K562 (cell line): ENCODE measurements at regions of chr19 and their contacts with region 1.

Region 1: DNA sequence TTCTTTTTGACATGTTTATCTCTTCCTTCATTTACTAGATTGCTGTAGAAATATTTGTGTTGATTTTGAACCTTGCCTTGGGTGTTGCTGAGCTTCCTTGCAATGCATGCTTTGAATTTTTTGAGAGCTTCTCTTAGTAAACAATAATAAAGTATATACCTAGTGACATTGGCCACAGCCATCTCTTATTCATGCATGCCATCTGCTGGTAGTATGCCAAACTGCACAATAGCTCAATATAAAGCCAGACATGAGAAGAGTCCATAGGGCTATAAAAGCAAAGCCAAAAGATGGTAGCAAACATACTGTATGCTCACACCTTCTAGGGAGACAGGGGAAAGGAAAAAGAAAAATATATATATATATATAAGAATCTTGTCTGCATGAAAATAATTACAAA is 18.9 kb upstream of the ZSCAN5A start:
- DNase-seq: peak; percentile 48 to 72 (median 55)
- ATAC-seq: peak; percentile 89
- H3K4me3 ChIP-seq: no peak overlapping the region
- H3K27ac ChIP-seq: no peak overlapping the region
- H3K4me1 ChIP-seq: no peaks in the 10 kb centered on the region
- H3K27me3 ChIP-seq: no peaks in the 10 kb centered on the region
- CTCF ChIP-seq: peak; percentile 69 to 94 (median 85)
- EP300 ChIP-seq: no peak
- POLR2A ChIP-seq: no peak
- RAD21 ChIP-seq: peak; percentile 92 to 98

Region 2: DNA sequence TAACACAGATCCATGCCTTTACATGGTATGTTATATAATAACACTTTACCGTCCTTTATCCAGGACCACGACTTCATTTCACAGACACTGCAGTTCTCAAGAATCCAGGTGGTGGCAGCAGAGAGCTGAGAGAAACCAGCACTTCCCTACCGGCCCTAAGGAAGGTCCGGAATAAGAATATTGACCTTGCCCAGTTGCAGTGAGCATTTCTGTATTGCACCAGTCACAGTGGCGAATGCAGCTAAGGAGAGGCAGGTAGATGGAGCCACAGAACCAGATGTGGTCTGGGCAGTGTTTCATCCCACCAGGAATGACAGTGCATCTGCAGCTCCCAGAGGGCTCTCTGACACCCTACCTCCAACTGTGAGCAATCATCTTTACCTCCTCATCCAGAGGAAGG is 257.0 kb before region 1 on chr19:
- CTCF ChIA-PET with region 1: interaction called, 5 read pairs
- POLR2A ChIA-PET with region 1: no interaction called
- in situ Hi-C with region 1: no loop called
- intact Hi-C with region 1: loop called (anchors 1 kb)
- DNase-seq: peak; percentile 60 to 72 (median 64)
- ATAC-seq: peak; percentile 86
- H3K4me3 ChIP-seq: no peak overlapping the region
- H3K27ac ChIP-seq: no peak overlapping the region
- H3K4me1 ChIP-seq: peaks cover 3 to 12% of the 10 kb centered on the region in 2 experiments; a peak in 4 of 5 replicates
- H3K27me3 ChIP-seq: no peaks in the 10 kb centered on the region
- CTCF ChIP-seq: peak; percentile 84 to 92 (median 85)
- EP300 ChIP-seq: no peak
- POLR2A ChIP-seq: no peak
- RAD21 ChIP-seq: peak; percentile 60 to 84

Region 3: GRCh38 chr19:56155124-56155687 is 178.3 kb before region 1 on chr19:
- CTCF ChIA-PET with region 1: no interaction called
- POLR2A ChIA-PET with region 1: no interaction called
- in situ Hi-C with region 1: no loop called
- intact Hi-C with region 1: loop called (anchors 2 kb)
- DNase-seq: peak; percentile 43 to 54 (median 50)
- ATAC-seq: peak; percentile 94
- H3K4me3 ChIP-seq: no peak overlapping the region
- H3K27ac ChIP-seq: no peak overlapping the region
- H3K4me1 ChIP-seq: peaks cover 0 to 4% of the 10 kb centered on the region in 2 experiments; a peak in 1 of 5 replicates
- H3K27me3 ChIP-seq: no peaks in the 10 kb centered on the region
- CTCF ChIP-seq: peak; percentile 66 to 74 (median 69)
- EP300 ChIP-seq: no peak
- POLR2A ChIP-seq: no peak
- RAD21 ChIP-seq: peak; percentile 35 to 60; a peak in 3 of 4 replicates

Region 4: GRCh38 chr19:56170261-56170660 is 163.2 kb before region 1 on chr19:
- CTCF ChIA-PET with region 1: no interaction called
- POLR2A ChIA-PET with region 1: no interaction called
- in situ Hi-C with region 1: no loop called
- intact Hi-C with region 1: loop called (anchors 5 kb)
- DNase-seq: peak; percentile 36 to 49 (median 45)
- ATAC-seq: peak; percentile 61
- H3K4me3 ChIP-seq: no peak overlapping the region
- H3K27ac ChIP-seq: no peak overlapping the region
- H3K4me1 ChIP-seq: peaks cover 0 to 10% of the 10 kb centered on the region in 2 experiments; a peak in 3 of 5 replicates
- H3K27me3 ChIP-seq: peaks cover 0 to 11% of the 10 kb centered on the region in 2 experiments; a peak in 1 of 5 replicates
- CTCF ChIP-seq: no peak
- EP300 ChIP-seq: no peak
- POLR2A ChIP-seq: no peak
- RAD21 ChIP-seq: no peak

Region 5: DNA sequence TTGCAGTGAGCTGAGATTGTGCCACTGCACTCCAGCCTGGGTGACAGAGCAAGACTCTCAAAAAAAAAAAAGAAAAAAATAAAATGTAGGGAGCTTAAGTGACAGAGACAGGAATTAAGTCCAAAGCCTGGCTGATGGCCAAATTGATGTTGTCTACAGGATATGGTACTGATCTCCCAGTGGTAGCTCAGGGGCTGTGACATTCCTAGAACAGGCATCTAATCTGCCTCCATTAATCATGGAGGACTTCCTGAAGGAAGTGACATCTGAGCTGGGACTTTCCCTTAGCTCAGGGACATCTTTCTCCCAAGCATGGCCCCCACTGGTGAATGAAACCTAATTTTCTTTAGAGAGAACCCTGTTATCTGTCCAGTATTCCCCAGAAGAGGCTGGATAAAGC is 72.4 kb before region 1 on chr19:
- CTCF ChIA-PET with region 1: interaction called, 3 read pairs
- POLR2A ChIA-PET with region 1: no interaction called
- in situ Hi-C with region 1: loop called (anchors 5 kb)
- intact Hi-C with region 1: no loop called
- DNase-seq: no peak
- ATAC-seq: no peak
- H3K4me3 ChIP-seq: no peak overlapping the region
- H3K27ac ChIP-seq: no peak overlapping the region
- H3K4me1 ChIP-seq: peaks cover 13 to 19% of the 10 kb centered on the region in 2 experiments; a peak in 4 of 5 replicates
- H3K27me3 ChIP-seq: no peaks in the 10 kb centered on the region
- CTCF ChIP-seq: no peak
- EP300 ChIP-seq: no peak
- POLR2A ChIP-seq: no peak
- RAD21 ChIP-seq: no peak

Region 6: DNA sequence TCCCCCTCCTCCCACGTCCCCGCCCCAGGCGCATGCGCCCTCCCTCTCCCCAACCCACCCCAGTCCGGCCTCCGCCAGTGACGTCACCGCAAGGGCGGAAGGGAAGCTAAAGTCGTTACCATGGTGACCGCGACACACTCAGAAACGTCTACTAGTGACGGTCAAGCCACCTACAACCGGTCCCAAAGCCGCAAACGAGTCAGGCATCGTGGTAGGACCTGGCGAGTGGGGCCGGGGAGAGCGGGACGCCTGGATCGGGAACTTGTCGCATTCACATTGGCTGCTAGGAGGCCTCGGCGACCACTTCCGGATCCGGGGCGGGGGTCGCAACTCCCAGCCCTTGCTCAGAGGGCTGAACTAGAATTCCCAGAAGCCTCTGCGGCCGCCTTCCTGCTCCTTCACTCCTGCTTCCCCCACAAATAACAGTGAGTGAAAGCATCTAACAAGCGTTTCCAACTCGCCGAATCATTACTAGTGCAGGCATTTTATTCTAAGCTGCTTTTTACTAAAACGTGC is 18.9 kb before region 1 on chr19 and contains the start of gene ZSCAN5A:
- CTCF ChIA-PET with region 1: interaction called, 10 read pairs
- POLR2A ChIA-PET with region 1: interaction called, 4 read pairs
- in situ Hi-C with region 1: no loop called
- intact Hi-C with region 1: loop called (anchors 2 kb)
- DNase-seq: peak; percentile 97 to 99 (median 99)
- ATAC-seq: peak; percentile 86
- H3K4me3 ChIP-seq: peak within 1 kb of the TSS; percentile 77
- H3K27ac ChIP-seq: peak within 1 kb of the TSS; percentile 99
- H3K4me1 ChIP-seq: peaks cover 15 to 17% of the 10 kb centered on the region in 2 experiments
- H3K27me3 ChIP-seq: no peaks in the 10 kb centered on the region
- CTCF ChIP-seq: no peak
- EP300 ChIP-seq: no peak
- POLR2A ChIP-seq: peak; percentile 75
- RAD21 ChIP-seq: no peak
- polyA plus RNA-seq, gene ZSCAN5A: 10.3 to 10.6 TPM